CD14-positive monocyte (primary cell): ENCODE measurements at regions of chr15 and their contacts with region 1.

Region 1: DNA sequence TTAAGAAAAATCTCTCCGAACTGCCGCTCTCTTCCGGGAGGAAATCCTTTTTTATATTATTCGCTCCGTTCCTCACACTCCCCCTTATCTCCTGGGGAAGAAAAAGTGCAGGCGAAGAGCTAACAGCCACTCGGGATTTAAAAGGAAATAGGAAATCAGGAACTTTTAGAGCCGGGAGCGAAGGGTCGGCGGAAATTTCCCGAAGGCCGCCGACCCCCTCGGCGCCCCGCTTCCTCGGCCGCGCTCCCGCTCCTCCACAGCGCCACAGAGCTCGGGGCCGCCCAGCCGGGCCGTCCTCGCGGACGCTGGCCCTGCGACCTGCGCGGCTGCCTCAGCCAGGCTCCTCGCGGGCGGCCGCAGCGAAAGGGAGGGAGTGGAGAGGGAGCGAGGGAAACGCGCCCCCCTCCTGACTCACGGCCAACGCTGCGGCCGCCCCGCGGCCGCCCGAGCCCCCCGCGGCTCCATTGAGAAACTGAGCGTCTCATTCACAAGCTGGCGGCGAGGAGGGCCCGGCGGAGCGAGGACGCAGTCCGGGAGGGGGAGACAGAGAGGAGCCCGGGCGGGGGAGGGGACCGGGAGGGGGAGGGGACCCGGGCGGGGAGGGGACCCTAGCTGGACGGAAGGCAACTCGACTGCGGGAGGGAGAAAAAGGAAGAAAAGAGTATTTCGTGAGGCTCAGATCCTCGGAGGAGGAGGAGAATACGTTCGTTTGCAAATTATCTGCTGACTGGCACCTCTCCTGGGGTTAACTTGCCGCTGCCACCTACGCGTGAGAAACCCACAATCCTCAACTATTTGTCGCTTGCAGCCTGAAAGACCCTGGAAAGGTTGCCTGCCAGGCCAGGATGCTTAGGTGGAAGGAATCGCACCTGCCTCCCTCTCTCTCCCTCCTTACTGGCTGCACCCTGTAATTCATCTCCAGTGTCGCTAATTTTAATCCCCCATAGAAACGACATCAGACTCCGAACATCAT is at the start of gene PTPN9:
- DNase-seq: peak; percentile 51 to 58 (median 57)
- H3K4me3 ChIP-seq: peak within 1 kb of the TSS; percentile 88 to 96 (median 95)
- H3K4me3 Mint-ChIP-seq: peak within 1 kb of the TSS; percentile 94 to 95
- H3K27ac ChIP-seq: peak within 1 kb of the TSS; percentile 70 to 88
- H3K27ac Mint-ChIP-seq: peak within 1 kb of the TSS; percentile 77 to 95 (median 90)
- H3K4me1 ChIP-seq: peaks cover 15 to 26% of the 10 kb centered on the region in 2 donors
- H3K4me1 Mint-ChIP-seq: peaks cover 27% of the 10 kb centered on the region
- H3K27me3 ChIP-seq: no peaks in the 10 kb centered on the region
- H3K27me3 Mint-ChIP-seq: peaks cover 0 to 1% (median 0%) of the 10 kb centered on the region in 3 donors
- CTCF ChIP-seq: peak; percentile 49
- polyA plus RNA-seq, gene PTPN9: 21.1 to 40.1 (median 28.0) TPM

Region 2: DNA sequence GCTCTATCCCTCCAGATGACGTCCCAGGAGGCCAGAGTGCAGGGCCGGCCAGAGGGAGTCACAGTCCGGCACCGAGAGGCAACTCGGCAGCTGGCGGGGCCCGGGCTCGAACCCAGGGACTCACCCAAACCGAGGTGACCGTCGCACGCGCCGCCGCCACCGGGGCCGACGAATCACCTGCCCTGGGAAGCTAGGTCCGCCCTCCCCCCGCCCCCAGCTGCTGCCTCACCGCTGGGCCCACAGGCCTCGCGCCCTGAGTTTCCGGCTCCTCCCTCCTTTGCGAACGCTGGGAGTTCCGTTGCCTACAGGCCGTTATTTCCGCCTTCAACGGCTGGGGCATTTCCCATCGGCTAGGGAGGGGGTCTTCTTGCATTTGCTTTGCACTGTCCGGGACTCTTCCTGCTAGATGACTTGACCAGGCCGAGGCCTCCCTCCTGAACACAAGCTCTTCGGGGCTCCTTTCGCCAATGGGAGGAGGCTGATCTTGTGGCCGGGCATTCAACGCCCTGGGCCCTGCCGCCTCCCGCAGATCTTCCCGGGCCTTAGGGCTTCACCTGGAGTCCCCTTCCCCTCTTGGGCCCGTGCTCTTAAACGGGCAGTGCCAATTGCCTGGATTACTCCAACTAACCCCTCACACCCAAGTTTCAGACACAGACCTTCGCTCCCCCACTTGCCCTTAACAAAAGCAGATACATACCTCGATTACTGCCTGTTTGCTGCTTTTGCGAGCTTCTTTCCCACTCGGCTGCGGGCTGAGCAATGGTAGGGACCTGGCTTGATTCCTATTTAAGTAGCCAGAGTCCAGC is 46.5 kb after region 1 on chr15 and contains the start of gene SNUPN:
- intact Hi-C with region 1: loop called in 1 of 2 experiments (anchors 5 kb)
- DNase-seq: peak; percentile 87 to 93 (median 90)
- H3K4me3 ChIP-seq: peak within 1 kb of the TSS; percentile 83 to 97 (median 89)
- H3K4me3 Mint-ChIP-seq: peak within 1 kb of the TSS; percentile 92 to 95
- H3K27ac ChIP-seq: peak within 1 kb of the TSS; percentile 89 to 96
- H3K27ac Mint-ChIP-seq: peak within 1 kb of the TSS; percentile 94 to 99 (median 98)
- H3K4me1 ChIP-seq: peaks cover 23 to 32% of the 10 kb centered on the region in 2 donors
- H3K4me1 Mint-ChIP-seq: peaks cover 38% of the 10 kb centered on the region
- H3K27me3 ChIP-seq: no peaks in the 10 kb centered on the region
- H3K27me3 Mint-ChIP-seq: peaks cover 0 to 2% (median 2%) of the 10 kb centered on the region in 3 donors
- CTCF ChIP-seq: no peak
- polyA plus RNA-seq, gene SNUPN: 11.7 to 31.8 (median 29.3) TPM

Region 3: GRCh38 chr15:75647370-75648155 is 68.3 kb after region 1 on chr15 and contains the start of gene SNX33:
- intact Hi-C with region 1: loop called in 1 of 2 experiments (anchors 2 kb)
- DNase-seq: peak in 2 of 3 donors; percentile 40 to 53
- H3K4me3 ChIP-seq: peak within 1 kb of the TSS; percentile 81 to 98 (median 88)
- H3K4me3 Mint-ChIP-seq: peak within 1 kb of the TSS; percentile 96 to 98
- H3K27ac ChIP-seq: peak within 1 kb of the TSS; percentile 29 to 75
- H3K27ac Mint-ChIP-seq: peak within 1 kb of the TSS; percentile 49 to 81 (median 69)
- H3K4me1 ChIP-seq: peaks cover 34 to 61% of the 10 kb centered on the region in 2 donors
- H3K4me1 Mint-ChIP-seq: peaks cover 54% of the 10 kb centered on the region
- H3K27me3 ChIP-seq: peaks cover 0 to 8% of the 10 kb centered on the region in 2 donors
- H3K27me3 Mint-ChIP-seq: peaks cover 12 to 22% (median 21%) of the 10 kb centered on the region in 3 donors
- CTCF ChIP-seq: peak; percentile 45
- polyA plus RNA-seq, gene SNX33: 2.4 to 4.8 (median 2.4) TPM